ENCODE measurements at regions of chr5 and their contacts with region 1.

Region 1: GRCh38 chr5:107571621-107572536 is 98.9 kb downstream of the EFNA5 start:
- DNase-seq: peak; percentile 52 to 89 (median 78)
- ATAC-seq: peak; percentile 87 to 92 (median 90)
- H3K4me3 ChIP-seq: peak overlapping the region; percentile 51 to 91
- H3K4me3 Mint-ChIP-seq: peak overlapping the region; percentile 79 to 81 (median 81)
- H3K27ac ChIP-seq: peak overlapping the region; percentile 67
- H3K27ac Mint-ChIP-seq: peak overlapping the region in 1 of 2 donors; percentile 17
- H3K4me1 ChIP-seq: peaks cover 3 to 17% of the 10 kb centered on the region in 2 experiments
- H3K4me1 Mint-ChIP-seq: peaks cover 19 to 22% (median 19%) of the 10 kb centered on the region in 3 donors
- H3K27me3 ChIP-seq: peaks cover 0 to 5% of the 10 kb centered on the region in 2 experiments
- H3K27me3 Mint-ChIP-seq: peaks cover 9 to 13% of the 10 kb centered on the region in 2 donors

Region 2: GRCh38 chr5:107561838-107562237 is 10.0 kb before region 1 on chr5:
- CTCF ChIA-PET with region 1: interaction called, 3 to 16 read pairs
- POLR2A ChIA-PET with region 1: no interaction called
- DNase-seq: no peak
- ATAC-seq: no peak
- H3K4me3 ChIP-seq: no peak overlapping the region
- H3K4me3 Mint-ChIP-seq: no peak overlapping the region
- H3K27ac ChIP-seq: no peak overlapping the region
- H3K27ac Mint-ChIP-seq: no peak overlapping the region
- H3K4me1 ChIP-seq: no peaks in the 10 kb centered on the region
- H3K4me1 Mint-ChIP-seq: no peaks in the 10 kb centered on the region
- H3K27me3 ChIP-seq: peaks cover 0 to 4% of the 10 kb centered on the region in 2 experiments
- H3K27me3 Mint-ChIP-seq: peaks cover 10 to 35% of the 10 kb centered on the region in 2 donors

Measured in T-cell (primary cell).